ENCODE measurements at regions of chr6 and their contacts with region 1.

Region 1: DNA sequence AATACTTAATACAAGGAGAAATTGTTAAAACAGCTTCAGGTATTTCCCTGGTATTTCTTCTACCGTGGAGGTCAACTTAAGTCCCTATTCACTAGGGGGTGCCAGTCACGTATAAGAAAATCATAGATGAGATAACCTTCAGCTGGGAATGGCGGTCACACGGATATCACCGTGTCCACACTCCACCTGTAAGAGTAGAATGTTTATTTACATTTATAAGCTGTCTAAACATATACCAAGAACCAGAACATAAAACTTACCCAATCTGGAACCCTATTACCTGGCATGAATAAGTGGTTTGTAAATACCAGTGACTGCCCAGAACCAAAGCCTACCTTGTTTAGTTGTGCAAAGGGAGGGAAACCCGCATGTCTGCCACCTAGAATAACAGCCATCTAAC is 1.9 kb upstream of the ELOVL4 start:
- DNase-seq: peak; percentile 90
- ATAC-seq: peak; percentile 22
- H3K4me3 Mint-ChIP-seq: no peak overlapping the region
- H3K27ac Mint-ChIP-seq: no peak overlapping the region
- H3K4me1 Mint-ChIP-seq: peaks cover 23% of the 10 kb centered on the region
- H3K27me3 Mint-ChIP-seq: peaks cover 5% of the 10 kb centered on the region
- CTCF ChIP-seq: peak; percentile 87

Region 2: GRCh38 chr6:79928478-79928998 is 20.7 kb before region 1 on chr6:
- CTCF ChIA-PET with region 1: interaction called, 33 read pairs
- POLR2A ChIA-PET with region 1: no interaction called
- intact Hi-C with region 1: no loop called
- DNase-seq: no peak
- ATAC-seq: no peak
- H3K4me3 Mint-ChIP-seq: no peak overlapping the region
- H3K27ac Mint-ChIP-seq: no peak overlapping the region
- H3K4me1 Mint-ChIP-seq: peaks cover 12% of the 10 kb centered on the region
- H3K27me3 Mint-ChIP-seq: no peaks in the 10 kb centered on the region
- CTCF ChIP-seq: no peak

Region 3: GRCh38 chr6:79971195-79971594 is 22.0 kb after region 1 on chr6:
- CTCF ChIA-PET with region 1: interaction called, 13 read pairs
- POLR2A ChIA-PET with region 1: no interaction called
- intact Hi-C with region 1: no loop called
- DNase-seq: no peak
- ATAC-seq: no peak
- H3K4me3 Mint-ChIP-seq: no peak overlapping the region
- H3K27ac Mint-ChIP-seq: no peak overlapping the region
- H3K4me1 Mint-ChIP-seq: no peaks in the 10 kb centered on the region
- H3K27me3 Mint-ChIP-seq: no peaks in the 10 kb centered on the region
- CTCF ChIP-seq: no peak

Region 4: DNA sequence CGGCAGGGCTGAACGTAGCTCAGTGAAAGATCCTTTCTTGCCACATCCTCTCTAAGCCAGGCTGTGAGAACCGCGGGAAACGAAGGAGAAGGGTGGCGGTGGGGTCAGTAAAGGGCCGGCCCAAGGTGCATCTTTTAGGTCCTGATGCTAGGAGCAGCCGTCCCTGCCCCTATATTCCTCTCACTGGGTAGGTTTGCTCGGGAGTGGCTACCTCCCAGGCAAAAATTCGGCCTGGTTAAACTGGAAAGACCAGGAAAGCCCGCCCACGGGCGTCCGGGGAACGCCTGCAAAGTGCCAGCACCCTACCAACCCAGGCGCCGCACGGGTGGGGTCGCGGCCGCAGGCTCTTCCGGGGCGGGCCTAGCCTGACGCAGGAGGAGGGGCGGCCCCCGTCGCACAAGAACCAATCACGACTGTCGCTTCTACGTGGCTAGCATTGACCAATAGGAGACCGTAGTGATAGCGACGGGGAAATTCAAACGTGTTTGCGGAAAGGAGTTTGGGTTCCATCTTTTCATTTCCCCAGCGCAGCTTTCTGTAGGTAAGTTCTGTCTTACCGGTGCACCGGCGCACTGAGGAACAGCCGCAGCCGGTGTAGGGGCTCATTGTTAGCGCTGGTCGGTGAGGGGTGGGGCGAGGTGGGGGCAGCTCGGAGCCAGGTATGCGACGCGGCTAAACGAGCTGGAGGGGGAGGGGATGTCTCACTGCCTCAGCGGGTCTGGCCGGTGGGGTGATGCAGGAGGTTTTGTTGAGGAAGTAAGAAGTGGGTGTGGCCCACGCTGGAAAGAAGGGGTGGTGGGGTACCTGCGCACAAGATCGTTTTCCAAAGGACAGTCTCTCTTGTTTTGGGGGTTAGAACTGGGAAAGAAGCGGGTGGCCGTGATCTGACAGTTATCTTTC is 55.2 kb after region 1 on chr6 and contains the start of gene TTK:
- CTCF ChIA-PET with region 1: interaction called, 14 read pairs
- POLR2A ChIA-PET with region 1: interaction called, 4 read pairs
- intact Hi-C with region 1: loop called (anchors 2 kb)
- DNase-seq: peak; percentile 93
- ATAC-seq: peak; percentile 99
- H3K4me3 Mint-ChIP-seq: peak within 1 kb of the TSS; percentile 95
- H3K27ac Mint-ChIP-seq: peak within 1 kb of the TSS; percentile 94
- H3K4me1 Mint-ChIP-seq: peaks cover 24% of the 10 kb centered on the region
- H3K27me3 Mint-ChIP-seq: no peaks in the 10 kb centered on the region
- CTCF ChIP-seq: no peak
- total RNA-seq, gene TTK: 31.6 to 36.8 TPM

Region 5: DNA sequence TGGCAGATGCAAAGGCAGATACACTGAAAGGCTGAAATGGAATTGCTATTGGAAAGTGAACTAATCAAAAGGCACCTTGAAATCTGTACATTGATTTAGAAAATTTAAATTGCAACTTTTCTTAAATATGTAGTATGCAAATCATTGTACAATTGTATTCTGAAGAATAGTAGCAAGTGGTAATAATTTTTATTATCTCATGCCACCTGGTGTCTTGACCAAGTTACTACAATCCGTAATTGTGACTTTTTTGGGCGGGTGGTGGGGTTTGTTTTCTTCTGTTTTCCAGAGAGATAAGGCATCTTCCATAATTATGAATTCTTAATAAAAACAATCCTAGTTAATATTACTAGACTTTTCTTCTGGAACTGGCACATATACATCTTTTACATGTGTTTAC is 144.8 kb after region 1 on chr6:
- CTCF ChIA-PET with region 1: interaction called, 97 read pairs
- POLR2A ChIA-PET with region 1: interaction called, 3 read pairs
- intact Hi-C with region 1: loop called (anchors 1 kb)
- DNase-seq: peak; percentile 22
- ATAC-seq: peak; percentile 64
- H3K4me3 Mint-ChIP-seq: no peak overlapping the region
- H3K27ac Mint-ChIP-seq: no peak overlapping the region
- H3K4me1 Mint-ChIP-seq: no peaks in the 10 kb centered on the region
- H3K27me3 Mint-ChIP-seq: peaks cover 3% of the 10 kb centered on the region
- CTCF ChIP-seq: peak; percentile 82